Breast epithelium (tissue), 4 donors: ENCODE measurements at regions of chr7 and their contacts with region 1.

Region 1: DNA sequence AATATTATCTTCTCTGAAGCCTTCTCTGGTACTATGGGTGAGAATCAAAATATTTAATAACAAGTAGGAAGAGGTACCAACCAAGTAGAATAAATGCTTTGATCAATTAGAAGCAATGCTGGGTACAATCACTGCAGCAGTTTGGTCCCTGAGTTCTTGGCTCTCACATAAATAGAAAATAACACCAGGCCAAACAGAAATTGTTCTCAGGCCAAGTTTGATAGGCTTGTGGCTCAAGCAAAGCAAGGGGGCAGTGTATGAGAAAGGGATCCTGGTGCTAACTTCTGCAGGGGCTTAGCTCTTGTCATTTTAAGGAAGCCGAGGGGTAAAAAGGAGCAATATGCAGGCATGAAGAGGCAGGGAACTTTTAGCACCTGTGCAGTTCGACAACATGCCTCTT is 146.8 kb upstream of the TMEM229A start:
- DNase-seq: no peak
- H3K4me3 ChIP-seq: no peak overlapping the region
- H3K27ac ChIP-seq: no peak overlapping the region
- H3K4me1 ChIP-seq: no peaks in the 10 kb centered on the region
- H3K27me3 ChIP-seq: no peaks in the 10 kb centered on the region
- CTCF ChIP-seq: no peak
- POLR2A ChIP-seq: no peak

Region 2: DNA sequence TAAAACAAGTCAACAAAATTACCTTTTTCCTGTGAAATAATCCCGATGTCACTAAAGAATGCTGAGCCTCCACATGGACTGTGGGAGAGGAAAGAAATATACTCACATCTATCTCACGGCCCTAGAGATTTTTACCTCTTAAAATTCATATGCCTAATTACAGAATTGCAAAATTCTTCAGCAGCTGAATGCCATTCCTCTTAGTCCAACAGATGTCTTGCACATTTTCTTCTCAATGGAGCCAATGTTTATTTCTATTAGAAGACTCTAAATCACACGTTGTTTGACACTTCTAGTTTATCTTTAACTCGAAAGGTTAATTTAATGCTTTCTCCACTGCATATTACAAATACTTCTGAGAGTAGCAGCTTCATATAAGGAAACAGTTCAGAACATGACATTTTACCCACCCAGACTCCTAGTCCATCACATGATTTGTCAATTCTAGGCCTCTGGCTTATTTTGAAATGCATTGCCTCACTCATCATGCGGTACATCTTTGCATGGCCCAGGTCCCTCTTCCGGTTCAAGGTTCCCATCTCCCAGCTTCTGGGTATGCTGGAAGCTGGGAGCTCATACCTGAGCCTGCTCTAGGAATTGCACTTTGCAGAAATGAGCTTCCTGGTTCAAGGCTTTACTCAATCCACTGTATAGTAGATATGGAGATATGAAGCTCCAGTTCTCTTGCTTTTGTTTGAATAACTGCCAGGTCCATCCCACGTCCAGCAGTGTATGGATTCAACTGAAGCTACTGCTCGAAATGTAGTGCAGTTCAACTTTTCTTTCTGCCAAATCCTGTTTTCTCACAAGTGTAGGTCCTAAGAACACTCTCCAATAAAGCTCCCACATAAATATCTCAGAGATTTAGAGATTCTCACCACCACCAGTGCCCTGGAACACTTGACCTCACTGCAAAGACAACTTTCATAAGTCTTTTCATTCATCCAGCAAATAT is 279.7 kb after region 1 on chr7:
- intact Hi-C with region 1: loop called (anchors 5 kb)
- DNase-seq: no peak
- H3K4me3 ChIP-seq: no peak overlapping the region
- H3K27ac ChIP-seq: peak overlapping the region in 1 of 2 donors; percentile 36
- H3K4me1 ChIP-seq: no peaks in the 10 kb centered on the region
- H3K27me3 ChIP-seq: no peaks in the 10 kb centered on the region
- CTCF ChIP-seq: no peak
- POLR2A ChIP-seq: no peak